ENCODE measurements at regions of chr1 and their contacts with region 1.

Region 1: DNA sequence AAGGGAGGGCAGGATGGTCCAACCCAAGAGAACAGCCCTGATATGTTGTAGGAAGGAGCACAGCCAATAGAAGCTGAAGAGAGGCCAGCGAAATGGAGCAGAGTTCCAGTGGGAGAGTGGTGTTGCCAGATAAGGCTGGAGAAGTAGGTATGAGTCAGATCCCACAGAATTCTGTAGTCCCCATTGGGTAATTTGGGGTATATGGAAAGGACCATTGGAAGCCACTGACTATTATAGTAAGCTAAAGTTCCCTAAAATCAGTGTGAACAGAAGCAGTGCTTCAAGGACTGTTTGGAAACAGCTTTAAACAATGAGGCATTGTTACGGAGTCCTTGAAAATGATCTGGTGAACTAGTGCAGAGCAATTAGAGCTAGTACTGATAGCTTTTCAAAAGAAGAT is 63.0 kb downstream of the DISP1 start:
- DNase-seq: no peak
- ATAC-seq: no peak
- H3K4me3 ChIP-seq: no peak overlapping the region
- H3K27ac ChIP-seq: no peak overlapping the region
- H3K4me1 ChIP-seq: peaks cover 5% of the 10 kb centered on the region; the same call in 1 of the 2 replicates
- H3K27me3 ChIP-seq: no peaks in the 10 kb centered on the region
- CTCF ChIP-seq: no peak

Region 2: GRCh38 chr1:222713091-222713961 is 164.5 kb before region 1 on chr1:
- CTCF ChIA-PET with region 1: no interaction called
- POLR2A ChIA-PET with region 1: no interaction called
- intact Hi-C with region 1: no loop called
- DNase-seq: peak; percentile 99
- ATAC-seq: peak; percentile 63
- H3K4me3 ChIP-seq: peak overlapping the region; percentile 79
- H3K27ac ChIP-seq: peak overlapping the region; percentile 78
- H3K4me1 ChIP-seq: peaks cover 19% of the 10 kb centered on the region
- H3K27me3 ChIP-seq: no peaks in the 10 kb centered on the region
- CTCF ChIP-seq: no peak

Region 3: GRCh38 chr1:222967466-222968240 is 89.8 kb after region 1 on chr1:
- CTCF ChIA-PET with region 1: no interaction called
- POLR2A ChIA-PET with region 1: interaction called, 13 read pairs
- intact Hi-C with region 1: no loop called
- DNase-seq: no peak
- ATAC-seq: no peak
- H3K4me3 ChIP-seq: no peak overlapping the region
- H3K27ac ChIP-seq: no peak overlapping the region
- H3K4me1 ChIP-seq: no peaks in the 10 kb centered on the region
- H3K27me3 ChIP-seq: no peaks in the 10 kb centered on the region
- CTCF ChIP-seq: no peak

Region 4: GRCh38 chr1:224149713-224150112 is 1271.9 kb after region 1 on chr1:
- CTCF ChIA-PET with region 1: no interaction called
- POLR2A ChIA-PET with region 1: no interaction called
- intact Hi-C with region 1: no loop called
- DNase-seq: peak; percentile 34
- ATAC-seq: peak; percentile 33; the same call in 1 of the 2 replicates
- H3K4me3 ChIP-seq: no peak overlapping the region
- H3K27ac ChIP-seq: no peak overlapping the region
- H3K4me1 ChIP-seq: no peaks in the 10 kb centered on the region
- H3K27me3 ChIP-seq: no peaks in the 10 kb centered on the region
- CTCF ChIP-seq: no peak